AG04450 (cell line): ENCODE measurements at regions of chr11 and their contacts with region 1.

Region 1: GRCh38 chr11:72793425-72794367 is at the start of gene STARD10:
- DNase-seq: peak; percentile 89
- H3K4me3 ChIP-seq: peak within 1 kb of the TSS; percentile 75
- H3K27ac ChIP-seq: peak within 1 kb of the TSS; percentile 96
- H3K27me3 ChIP-seq: no peaks in the 10 kb centered on the region
- CTCF ChIP-seq: peak; percentile 94
- polyA plus RNA-seq, gene STARD10: 38.4 and 49.0 TPM in 2 replicates

Region 2: GRCh38 chr11:72585762-72586311 is 207.9 kb before region 1 on chr11:
- CTCF ChIA-PET with region 1: no interaction called
- POLR2A ChIA-PET with region 1: no interaction called
- DNase-seq: peak; percentile 10
- H3K4me3 ChIP-seq: no peak overlapping the region
- H3K27ac ChIP-seq: no peak overlapping the region
- H3K27me3 ChIP-seq: peaks cover 74% of the 10 kb centered on the region
- CTCF ChIP-seq: peak; percentile 84

Region 3: GRCh38 chr11:72716290-72716689 is 77.4 kb before region 1 on chr11:
- CTCF ChIA-PET with region 1: interaction called, 17 read pairs
- POLR2A ChIA-PET with region 1: no interaction called
- DNase-seq: no peak
- H3K4me3 ChIP-seq: no peak overlapping the region
- H3K27ac ChIP-seq: no peak overlapping the region
- H3K27me3 ChIP-seq: no peaks in the 10 kb centered on the region
- CTCF ChIP-seq: no peak